ENCODE measurements at regions of chr15 and their contacts with region 1.

Region 1: DNA sequence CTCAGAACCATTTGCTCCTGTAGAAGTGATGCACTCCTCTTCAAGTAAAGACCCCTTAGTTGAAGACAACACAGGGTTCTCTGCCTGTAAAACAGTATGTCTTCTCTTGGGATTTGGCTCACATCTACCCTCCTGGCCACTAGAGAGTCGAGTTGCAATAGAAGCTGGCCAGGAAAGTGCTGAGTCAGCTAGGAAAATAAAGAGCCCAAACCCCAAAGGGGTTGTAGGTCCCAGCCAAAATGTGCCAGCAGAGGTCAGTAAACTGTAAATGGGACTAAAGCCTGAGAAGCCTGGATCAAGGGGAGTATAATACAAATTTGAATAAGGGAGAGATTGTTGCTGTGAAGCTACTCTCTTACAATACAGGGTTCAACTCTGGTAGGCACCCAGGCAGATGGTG is 37.2 kb upstream of the THBS1 start:
- DNase-seq: no peak
- H3K4me3 ChIP-seq: no peak overlapping the region
- H3K27ac ChIP-seq: no peak overlapping the region
- H3K4me1 ChIP-seq: no peaks in the 10 kb centered on the region
- H3K27me3 ChIP-seq: no peaks in the 10 kb centered on the region
- CTCF ChIP-seq: no peak

Region 2: DNA sequence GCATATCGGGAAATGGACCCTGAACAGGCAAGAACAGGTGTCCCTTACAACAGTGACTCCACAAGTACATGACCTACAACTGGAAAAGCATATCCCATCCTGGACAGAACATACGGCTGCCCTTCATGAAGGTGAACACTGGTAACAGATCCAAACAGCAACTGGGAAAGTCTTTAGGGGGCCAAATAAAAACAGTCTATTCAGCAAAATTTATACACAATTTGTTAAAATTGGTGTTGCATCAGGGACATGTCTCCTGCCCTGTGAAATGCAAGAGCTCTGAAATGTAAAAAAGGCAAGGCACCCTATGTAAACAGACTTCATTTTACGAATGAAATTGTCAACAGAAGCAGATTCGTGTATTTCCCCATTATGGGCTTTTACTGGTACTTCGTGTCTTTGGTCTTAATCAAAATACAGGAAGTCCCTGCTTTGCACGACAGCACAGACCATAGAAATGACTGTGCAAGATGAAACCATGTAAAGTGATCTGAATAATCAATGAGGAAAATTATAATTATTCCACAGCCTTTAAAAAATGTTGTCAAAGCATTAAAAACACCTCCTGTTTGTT is 90.1 kb before region 1 on chr15:
- CTCF ChIA-PET with region 1: no interaction called
- dilution Hi-C with region 1: no loop called
- in situ Hi-C with region 1: no loop called
- intact Hi-C with region 1: loop called (anchors 10 kb)
- DNase-seq: no peak
- H3K4me3 ChIP-seq: no peak overlapping the region
- H3K27ac ChIP-seq: no peak overlapping the region
- H3K4me1 ChIP-seq: peaks cover 6% of the 10 kb centered on the region
- H3K27me3 ChIP-seq: no peaks in the 10 kb centered on the region
- CTCF ChIP-seq: no peak